Endothelial cell of umbilical vein (primary cell): ENCODE measurements at regions of chr19 and their contacts with region 1.

Region 1: DNA sequence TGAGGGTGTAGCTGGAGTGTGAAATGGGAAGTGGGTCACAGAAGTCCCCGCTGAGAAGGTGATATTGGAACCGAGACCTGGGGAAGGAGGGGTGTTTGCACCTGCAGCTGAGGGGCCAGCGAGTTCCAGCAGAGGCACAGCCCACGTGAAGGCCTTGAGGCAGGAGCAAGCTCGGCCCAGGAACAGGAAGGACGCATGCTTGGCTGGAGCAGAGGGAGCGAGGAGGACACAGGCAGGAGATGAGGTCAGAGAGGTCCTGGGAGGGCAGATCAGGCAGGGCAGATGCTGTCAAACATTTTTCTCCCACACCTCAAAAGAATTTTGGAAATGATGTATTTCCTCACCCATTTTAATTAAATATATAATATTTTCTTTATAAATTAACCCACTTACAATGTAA is 9.3 kb downstream of the ZNF415 start:
- DNase-seq: no peak
- H3K4me3 ChIP-seq: no peak overlapping the region
- H3K27ac ChIP-seq: no peak overlapping the region
- H3K4me1 ChIP-seq: no peaks in the 10 kb centered on the region
- H3K27me3 ChIP-seq: no peaks in the 10 kb centered on the region
- CTCF ChIP-seq: no peak
- POLR2A ChIP-seq: no peak

Region 2: GRCh38 chr19:53037101-53038097 is 86.0 kb before region 1 on chr19:
- CTCF ChIA-PET with region 1: no interaction called
- POLR2A ChIA-PET with region 1: no interaction called
- dilution Hi-C with region 1: no loop called
- intact Hi-C with region 1: no loop called
- DNase-seq: peak; percentile 42
- H3K4me3 ChIP-seq: peak overlapping the region; percentile 43 to 86 (median 72)
- H3K27ac ChIP-seq: peak overlapping the region; percentile 15
- H3K4me1 ChIP-seq: no peaks in the 10 kb centered on the region
- H3K27me3 ChIP-seq: no peaks in the 10 kb centered on the region
- CTCF ChIP-seq: no peak
- POLR2A ChIP-seq: peak; percentile 50

Region 3: DNA sequence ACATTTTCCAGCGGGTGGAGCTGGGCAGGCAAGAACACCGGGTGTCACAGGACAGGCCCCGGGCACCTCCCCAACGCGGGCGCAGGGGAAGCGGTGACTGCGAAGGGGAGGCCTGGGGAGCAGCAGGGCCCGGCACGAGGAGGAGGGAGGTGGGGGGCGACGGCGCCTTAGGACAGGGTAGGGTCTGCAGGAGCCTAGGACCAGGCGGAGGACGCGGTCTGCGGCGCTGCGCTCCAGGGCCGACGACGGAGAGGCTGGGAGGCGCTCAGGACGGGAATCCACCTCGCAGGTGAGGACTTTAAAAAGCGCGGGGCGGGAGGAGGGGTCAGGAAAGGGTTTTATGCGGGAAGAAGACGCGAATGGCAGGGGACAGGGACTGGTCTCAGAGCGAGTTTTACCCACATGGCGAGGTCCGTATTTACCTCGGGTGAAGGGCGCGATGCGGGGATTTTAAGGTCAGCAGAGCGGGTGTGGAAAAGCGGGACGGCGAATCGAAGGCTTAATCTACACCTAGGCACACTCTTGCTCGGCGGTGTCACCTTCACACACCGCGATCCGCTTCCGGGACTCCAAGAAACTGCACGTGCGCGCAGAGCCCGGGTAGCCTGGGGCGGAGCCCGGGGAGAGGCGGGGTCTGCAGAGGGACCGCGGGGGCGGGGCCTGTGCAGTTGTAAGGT is 65.4 kb before region 1 on chr19:
- CTCF ChIA-PET with region 1: no interaction called
- POLR2A ChIA-PET with region 1: interaction called, 10 read pairs
- dilution Hi-C with region 1: no loop called
- intact Hi-C with region 1: no loop called
- DNase-seq: no peak
- H3K4me3 ChIP-seq: peak overlapping the region in 1 of 3 experiments; percentile 4
- H3K27ac ChIP-seq: no peak overlapping the region
- H3K4me1 ChIP-seq: no peaks in the 10 kb centered on the region
- H3K27me3 ChIP-seq: peaks cover 0 to 2% of the 10 kb centered on the region in 2 experiments
- CTCF ChIP-seq: no peak
- POLR2A ChIP-seq: no peak